AG04449 (cell line): ENCODE measurements at regions of chr6 and their contacts with region 1.

Region 1: GRCh38 chr6:108896111-108896661 is 48.0 kb downstream of the ARMC2 start:
- DNase-seq: peak; percentile 84
- H3K4me3 ChIP-seq: no peak overlapping the region
- CTCF ChIP-seq: no peak

Region 2: GRCh38 chr6:108549732-108550131 is 346.5 kb before region 1 on chr6:
- CTCF ChIA-PET with region 1: interaction called, 168 read pairs
- POLR2A ChIA-PET with region 1: no interaction called
- DNase-seq: no peak
- H3K4me3 ChIP-seq: no peak overlapping the region
- CTCF ChIP-seq: no peak

Region 3: GRCh38 chr6:108872141-108872557 is 24.0 kb before region 1 on chr6:
- CTCF ChIA-PET with region 1: interaction called, 20 read pairs
- POLR2A ChIA-PET with region 1: no interaction called
- DNase-seq: no peak
- H3K4me3 ChIP-seq: no peak overlapping the region
- CTCF ChIP-seq: no peak

Region 4: DNA sequence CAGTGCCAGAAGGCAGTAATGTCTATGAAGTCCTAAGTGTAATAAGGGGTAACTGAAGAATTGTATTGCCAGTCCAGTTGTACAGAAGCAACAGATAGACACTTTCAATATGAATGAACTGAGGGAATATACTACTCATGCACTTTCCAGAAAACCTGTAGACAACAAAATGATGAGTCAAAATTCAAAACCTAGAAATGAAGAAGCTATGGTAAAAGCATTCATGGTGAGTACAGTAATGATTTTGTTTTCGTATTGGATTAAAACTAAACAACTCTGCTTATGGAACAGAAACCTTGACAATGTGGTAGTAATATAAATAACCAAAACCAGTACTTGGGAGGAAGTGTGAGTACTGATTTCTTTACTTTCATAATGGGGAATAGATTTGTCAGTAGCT is 13.0 kb before region 1 on chr6:
- CTCF ChIA-PET with region 1: interaction called, 66 read pairs
- POLR2A ChIA-PET with region 1: no interaction called
- DNase-seq: no peak
- H3K4me3 ChIP-seq: no peak overlapping the region
- CTCF ChIP-seq: no peak